A549 (cell line): ENCODE measurements at regions of chr1 and their contacts with region 1.

Region 1: GRCh38 chr1:201792534-201793305 is 36.2 kb upstream of the IPO9 start:
- DNase-seq: peak; percentile 86 to 90
- ATAC-seq: peak; percentile 93 to 97
- H3K4me3 ChIP-seq: no peak overlapping the region
- H3K27ac ChIP-seq: peak overlapping the region in 1 of 2 experiments; percentile 61; a peak in 3 of 6 replicates
- H3K4me1 ChIP-seq: peaks cover 14% of the 10 kb centered on the region; the same call in 2 of the 3 replicates
- CTCF ChIP-seq: peak; percentile 97
- EP300 ChIP-seq: no peak
- POLR2A ChIP-seq: no peak
- RAD21 ChIP-seq: peak; percentile 99 to 100

Region 2: DNA sequence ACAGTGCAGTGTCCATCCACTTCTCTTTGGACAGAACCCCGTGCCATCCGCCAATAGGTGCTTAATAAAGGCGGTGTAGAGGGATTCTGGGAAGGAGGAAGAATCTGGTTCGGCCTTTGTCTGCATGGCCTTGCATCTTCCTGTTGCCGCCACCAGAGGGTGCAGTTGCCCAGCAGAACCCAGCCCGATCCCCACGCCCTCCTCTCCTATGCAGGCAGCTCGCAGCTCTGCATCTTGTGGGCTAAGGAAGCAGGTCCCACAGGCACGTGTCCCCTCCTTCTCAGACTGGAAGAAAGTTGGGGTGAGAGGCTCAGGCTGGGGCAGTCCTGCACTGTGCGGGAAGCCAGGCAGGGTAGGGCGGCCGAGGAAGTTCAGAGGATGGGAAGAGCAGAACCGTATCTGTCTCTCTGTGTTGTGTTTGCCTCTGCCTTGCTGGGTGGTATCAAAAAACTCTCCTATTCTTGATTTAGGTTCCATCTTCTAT is 233.0 kb before region 1 on chr1:
- CTCF ChIA-PET with region 1: interaction called, 227 read pairs
- POLR2A ChIA-PET with region 1: no interaction called
- DNase-seq: peak; percentile 85 to 92
- ATAC-seq: peak; percentile 88 to 96
- H3K4me3 ChIP-seq: no peak overlapping the region
- H3K27ac ChIP-seq: peak overlapping the region; percentile 60 to 80
- H3K4me1 ChIP-seq: peaks cover 37% of the 10 kb centered on the region
- CTCF ChIP-seq: peak; percentile 95
- EP300 ChIP-seq: no peak
- POLR2A ChIP-seq: no peak
- RAD21 ChIP-seq: peak; percentile 99 to 100

Region 3: DNA sequence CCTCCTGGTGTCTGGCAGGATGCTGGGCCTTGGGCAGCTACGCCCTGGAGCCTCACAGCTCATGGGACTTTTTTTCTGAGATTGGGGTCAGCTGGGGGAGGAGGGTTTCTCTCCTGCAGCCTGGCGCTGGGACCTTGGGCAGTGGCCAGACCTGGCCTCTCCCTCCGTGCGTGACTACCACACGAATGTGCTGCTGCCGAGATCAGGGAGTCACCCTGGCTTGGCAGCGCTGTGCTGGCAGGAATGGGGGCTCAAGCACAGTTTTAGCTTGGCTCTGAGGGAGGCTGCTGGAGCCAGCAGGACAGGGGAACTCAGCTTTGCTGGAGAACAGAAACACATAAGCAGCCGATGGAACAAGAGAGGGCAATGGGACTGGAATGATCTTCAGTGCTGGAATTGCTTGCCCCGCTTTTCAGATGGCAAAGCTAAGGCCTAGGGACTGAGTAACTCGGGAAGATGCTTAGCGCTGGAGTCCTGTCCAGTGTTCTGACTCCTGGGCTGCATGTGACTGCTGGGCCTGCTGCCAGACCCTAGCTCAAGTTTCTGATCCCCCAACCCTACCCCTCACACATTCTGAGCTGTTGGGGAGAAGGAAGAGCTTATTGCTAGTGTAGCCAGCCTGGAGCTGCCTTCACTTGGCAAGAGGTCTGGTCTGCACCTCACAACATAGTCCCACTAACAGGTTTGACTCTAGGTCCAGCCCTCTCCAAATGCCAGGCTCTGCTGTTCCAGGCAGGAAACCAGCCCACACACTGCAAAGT is 183.9 kb before region 1 on chr1:
- CTCF ChIA-PET with region 1: interaction called, 13 read pairs
- POLR2A ChIA-PET with region 1: no interaction called
- DNase-seq: no peak
- ATAC-seq: 0 out of 6 replicates have a peak, but pooled peaks of 1 of the 2 experiments have one; percentile 4
- H3K4me3 ChIP-seq: no peak overlapping the region
- H3K27ac ChIP-seq: peak overlapping the region in 1 of 2 experiments; percentile 62; a peak in 3 of 6 replicates
- H3K4me1 ChIP-seq: peaks cover 24% of the 10 kb centered on the region
- CTCF ChIP-seq: no peak
- EP300 ChIP-seq: no peak
- POLR2A ChIP-seq: no peak
- RAD21 ChIP-seq: no peak

Region 4: GRCh38 chr1:201696217-201696761 is 96.4 kb before region 1 on chr1:
- CTCF ChIA-PET with region 1: interaction called, 903 read pairs
- POLR2A ChIA-PET with region 1: no interaction called
- DNase-seq: no peak
- ATAC-seq: peak; percentile 74 to 83
- H3K4me3 ChIP-seq: no peak overlapping the region
- H3K27ac ChIP-seq: peak overlapping the region; percentile 45 to 74; a peak in 5 of 6 replicates
- H3K4me1 ChIP-seq: peaks cover 18% of the 10 kb centered on the region
- CTCF ChIP-seq: no peak
- EP300 ChIP-seq: no peak
- POLR2A ChIP-seq: no peak
- RAD21 ChIP-seq: no peak

Region 5: DNA sequence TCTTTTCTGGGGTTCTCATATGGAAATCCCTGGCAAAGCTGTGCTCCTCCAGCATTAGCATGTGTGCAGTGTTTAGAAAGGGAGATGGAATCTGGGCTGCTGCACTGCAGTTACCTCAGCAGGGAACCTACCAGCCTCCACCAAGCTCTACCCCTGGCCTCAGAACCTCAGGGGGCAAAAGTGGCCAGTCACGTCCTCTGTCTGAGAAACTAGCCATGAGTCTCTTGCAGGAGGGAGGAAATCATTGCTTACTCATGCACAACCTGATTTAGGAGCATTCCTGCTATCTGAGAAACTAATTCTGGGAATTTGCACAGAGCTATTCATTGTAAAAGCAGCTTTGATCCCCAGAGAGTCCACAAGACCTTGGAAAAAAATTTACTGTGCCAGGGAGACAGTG is 44.4 kb before region 1 on chr1:
- CTCF ChIA-PET with region 1: interaction called, 47 read pairs
- POLR2A ChIA-PET with region 1: no interaction called
- DNase-seq: peak in 1 of 2 experiments; percentile 43
- ATAC-seq: peak; percentile 44 to 82; a peak in 3 of 6 replicates
- H3K4me3 ChIP-seq: no peak overlapping the region
- H3K27ac ChIP-seq: peak overlapping the region; percentile 25 to 76; a peak in 4 of 6 replicates
- H3K4me1 ChIP-seq: peaks cover 61% of the 10 kb centered on the region
- CTCF ChIP-seq: no peak
- EP300 ChIP-seq: no peak; a peak in 1 of 5 replicates
- POLR2A ChIP-seq: no peak
- RAD21 ChIP-seq: no peak

Region 6: GRCh38 chr1:201807958-201808632 is 15.4 kb after region 1 on chr1:
- CTCF ChIA-PET with region 1: interaction called, 35 read pairs
- POLR2A ChIA-PET with region 1: no interaction called
- DNase-seq: no peak
- ATAC-seq: no peak
- H3K4me3 ChIP-seq: no peak overlapping the region
- H3K27ac ChIP-seq: no peak overlapping the region
- H3K4me1 ChIP-seq: no peaks in the 10 kb centered on the region
- CTCF ChIP-seq: no peak
- EP300 ChIP-seq: no peak
- POLR2A ChIP-seq: no peak
- RAD21 ChIP-seq: no peak